Dorsolateral prefrontal cortex (tissue), 120 donors: ENCODE measurements at regions of chr11 and their contacts with region 1.

Region 1: DNA sequence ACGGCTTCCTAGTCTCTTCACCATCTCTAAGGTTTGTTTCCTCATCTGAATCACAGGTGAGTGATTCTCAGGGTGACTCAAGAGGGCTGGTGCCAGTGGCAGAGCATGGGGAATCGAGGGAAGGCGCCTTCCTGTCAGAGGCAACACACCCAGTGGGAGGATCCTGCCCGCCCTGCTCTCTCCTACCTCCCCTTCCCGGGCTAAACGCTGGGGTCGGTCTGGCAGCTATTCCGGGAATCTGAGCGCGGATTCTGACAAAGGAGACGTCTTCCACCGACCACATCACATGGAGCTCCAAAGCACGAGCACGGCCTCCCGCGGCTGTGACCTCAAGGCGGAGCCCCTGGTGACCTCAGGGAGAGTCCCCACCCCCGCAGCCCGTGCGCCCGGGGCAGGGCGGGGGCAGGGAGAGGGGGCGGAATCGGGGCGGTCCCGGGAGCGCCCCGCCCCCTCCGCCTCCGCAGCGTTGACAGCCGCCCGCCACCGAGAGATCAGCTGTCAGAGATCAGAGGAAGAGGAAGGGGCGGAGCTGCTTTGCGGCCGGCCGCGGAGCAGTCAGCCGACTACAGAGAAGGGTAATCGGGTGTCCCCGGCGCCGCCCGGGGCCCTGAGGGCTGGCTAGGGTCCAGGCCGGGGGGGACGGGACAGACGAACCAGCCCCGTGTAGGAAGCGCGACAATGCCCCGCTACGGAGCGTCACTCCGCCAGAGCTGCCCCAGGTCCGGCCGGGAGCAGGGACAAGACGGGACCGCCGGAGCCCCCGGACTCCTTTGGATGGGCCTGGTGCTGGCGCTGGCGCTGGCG is at the start of gene SMPD1:
- DNase-seq: peak; percentile 87 to 94 (median 92)
- H3K4me3 ChIP-seq: peak within 1 kb of the TSS; percentile 61 to 99 (median 90)
- H3K27ac ChIP-seq: peak within 1 kb of the TSS; percentile 68 to 99 (median 94)
- H3K27me3 ChIP-seq: no peaks in the 10 kb centered on the region
- CTCF ChIP-seq: peak in 24 of 56 donors; percentile 5 to 60 (median 34)
- total RNA-seq, gene SMPD1: 37.6 to 97.6 (median 53.8) TPM

Region 2: DNA sequence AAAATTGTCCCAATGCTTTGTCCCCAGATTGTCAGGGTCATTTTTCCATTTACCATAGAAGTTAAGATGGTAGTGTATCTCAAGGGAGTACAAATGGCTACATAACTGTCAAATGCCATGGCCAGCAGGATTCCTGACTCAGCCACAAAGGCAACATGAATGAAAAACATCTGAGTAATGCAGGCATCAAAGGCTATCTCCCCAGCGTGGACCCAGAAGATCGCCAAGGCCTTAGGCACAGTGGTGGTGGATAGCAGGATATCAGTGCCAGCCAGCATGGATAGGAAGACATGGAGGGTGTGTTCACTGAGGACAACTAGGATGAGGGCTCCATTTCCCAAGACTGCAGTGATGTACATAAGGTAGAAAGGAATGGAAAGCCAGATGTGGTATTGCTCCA is 238.0 kb before region 1 on chr11:
- intact Hi-C with region 1: no loop called
- DNase-seq: no peak
- H3K4me3 ChIP-seq: no peak overlapping the region
- H3K27ac ChIP-seq: no peak overlapping the region
- H3K27me3 ChIP-seq: no peaks in the 10 kb centered on the region
- CTCF ChIP-seq: no peak

Region 3: DNA sequence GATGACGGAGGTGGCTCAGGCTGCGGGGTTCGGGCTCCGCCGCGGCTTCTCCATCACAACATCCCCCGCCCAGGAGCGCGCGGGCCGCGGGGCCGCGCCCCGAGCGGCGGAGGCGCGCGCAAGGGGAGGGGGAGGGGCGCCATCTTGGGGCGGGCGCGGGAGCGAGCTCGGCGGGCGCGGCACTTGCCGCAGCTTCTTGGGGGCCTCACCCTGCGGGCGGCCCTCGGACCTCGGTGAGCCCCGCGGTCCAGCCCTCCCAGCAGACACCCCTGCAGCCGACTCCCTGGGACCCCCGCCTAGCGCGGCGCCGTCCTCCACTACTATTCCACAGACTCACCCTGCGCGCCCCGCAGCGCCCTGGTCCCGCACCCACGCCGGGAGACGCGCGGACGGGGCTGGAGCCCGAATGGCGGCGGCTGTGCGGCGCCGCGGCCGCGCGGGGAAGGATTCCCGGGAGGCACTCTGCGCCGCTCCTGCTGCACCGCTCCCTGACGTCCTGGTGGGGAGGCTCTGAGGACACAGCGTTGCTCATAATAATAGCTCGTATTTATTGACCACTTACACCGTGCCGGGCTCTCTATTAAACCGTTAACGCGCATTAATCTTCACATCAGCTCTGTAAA is 29.0 kb after region 1 on chr11 and contains the start of gene APBB1:
- intact Hi-C with region 1: loop called in 1 of 2 experiments (anchors 2 kb)
- DNase-seq: peak in 7 of 10 donors; percentile 57 to 87 (median 67)
- H3K4me3 ChIP-seq: peak within 1 kb of the TSS; percentile 69 to 100 (median 93)
- H3K27ac ChIP-seq: peak within 1 kb of the TSS; percentile 91 to 100 (median 98)
- H3K27me3 ChIP-seq: no peaks in the 10 kb centered on the region
- CTCF ChIP-seq: peak in 39 of 56 donors; percentile 7 to 53 (median 27)
- total RNA-seq, gene APBB1: 235 to 475 (median 368) TPM

Region 4: GRCh38 chr11:6612213-6613041 is 222.3 kb after region 1 on chr11 and contains the start of gene TAF10:
- intact Hi-C with region 1: loop called (anchors 5 kb)
- DNase-seq: peak; percentile 94 to 98 (median 97)
- H3K4me3 ChIP-seq: peak within 1 kb of the TSS; percentile 59 to 89 (median 79)
- H3K27ac ChIP-seq: peak within 1 kb of the TSS; percentile 85 to 100 (median 99)
- H3K27me3 ChIP-seq: no peaks in the 10 kb centered on the region
- CTCF ChIP-seq: peak in 33 of 56 donors; percentile 5 to 45 (median 23)
- total RNA-seq, gene TAF10: 45.6 to 116 (median 75.0) TPM